ENCODE measurements at regions of chr9 and their contacts with region 1.

Region 1: DNA sequence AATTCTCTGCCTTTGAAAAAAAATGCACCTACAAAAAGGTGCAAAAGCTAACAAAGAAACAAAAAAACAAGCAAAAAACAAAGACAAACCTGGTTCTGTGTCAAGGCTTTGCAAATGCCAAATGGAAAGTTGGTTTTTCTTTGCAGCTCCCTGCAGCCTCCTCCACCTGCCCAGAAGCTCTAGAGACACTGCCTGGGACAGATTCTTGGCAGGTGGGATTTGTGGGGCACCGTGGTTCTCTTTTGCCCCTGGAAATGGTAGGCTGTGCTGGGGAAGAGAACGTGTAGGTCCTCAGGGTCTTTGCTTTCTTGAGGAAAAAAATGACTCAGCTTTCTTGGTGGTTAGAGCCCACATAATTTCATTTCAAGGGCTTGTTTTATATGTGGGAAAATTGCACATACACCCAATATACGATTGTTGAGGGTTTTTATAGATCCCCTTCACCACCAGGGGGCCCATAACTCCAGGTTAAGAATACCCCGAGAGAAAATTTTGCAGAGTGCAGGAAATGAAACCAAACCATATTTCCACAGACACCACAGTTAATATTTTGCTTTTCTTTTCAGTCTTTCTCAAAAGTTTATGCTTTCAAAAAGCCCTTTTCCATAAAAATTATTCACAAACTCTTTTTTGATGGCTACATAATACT is 58.7 kb downstream of the NXNL2 start:
- DNase-seq: peak in 1 of 2 donors; percentile 50
- H3K4me3 ChIP-seq: no peak overlapping the region
- CTCF ChIP-seq: no peak
- POLR2A ChIP-seq: no peak

Region 2: DNA sequence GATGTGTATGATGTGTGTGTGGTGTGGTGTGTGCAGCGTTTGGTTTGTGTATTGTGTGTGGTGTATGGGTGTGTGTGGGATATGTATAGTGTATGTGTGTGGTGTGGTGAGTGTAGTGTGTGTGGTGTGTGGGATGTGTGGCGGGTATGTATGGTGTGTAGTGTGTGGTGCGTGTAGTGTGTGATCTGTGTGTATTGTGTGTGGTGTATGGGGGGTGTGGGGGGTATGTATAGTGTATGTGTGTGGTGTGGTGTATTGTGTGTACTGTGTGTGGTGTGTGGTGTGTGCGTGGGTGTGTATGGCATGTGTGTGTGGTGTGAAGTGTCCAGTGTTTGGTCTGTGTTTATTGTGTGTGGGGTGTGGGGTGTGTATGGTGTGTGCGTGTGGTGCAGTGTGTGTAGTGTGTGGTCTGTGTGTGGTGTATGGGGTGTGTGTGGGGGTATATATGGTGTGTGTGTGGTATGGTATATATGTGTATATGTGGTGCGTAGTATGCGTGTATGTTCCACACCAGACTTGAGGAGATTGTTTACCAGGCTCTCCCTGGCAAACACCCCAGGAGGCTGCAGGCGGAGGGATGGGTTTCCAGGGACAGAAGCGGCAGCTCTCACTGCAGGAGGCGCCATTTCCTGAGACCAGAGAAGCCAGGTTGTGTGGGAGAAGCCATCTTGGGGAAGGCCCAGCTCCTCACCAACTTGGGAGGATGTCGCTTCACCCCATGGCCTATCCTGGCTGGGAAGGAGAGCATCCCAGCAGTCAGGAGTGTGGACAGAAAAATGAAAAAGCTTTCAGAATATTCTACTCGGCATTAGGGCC is 79.4 kb after region 1 on chr9:
- intact Hi-C with region 1: no loop called
- DNase-seq: no peak
- H3K4me3 ChIP-seq: no peak overlapping the region
- CTCF ChIP-seq: no peak
- POLR2A ChIP-seq: no peak

Region 3: GRCh38 chr9:89000973-89001916 is 407.6 kb after region 1 on chr9:
- intact Hi-C with region 1: loop called (anchors 5 kb)
- DNase-seq: peak; percentile 88 to 97
- H3K4me3 ChIP-seq: no peak overlapping the region
- CTCF ChIP-seq: peak in 1 of 3 donors; percentile 30
- POLR2A ChIP-seq: no peak

Region 4: GRCh38 chr9:89281106-89281505 is 687.4 kb after region 1 on chr9:
- intact Hi-C with region 1: loop called (anchors 10 kb)
- DNase-seq: no peak
- H3K4me3 ChIP-seq: no peak overlapping the region
- CTCF ChIP-seq: no peak
- POLR2A ChIP-seq: no peak